Caco-2 (cell line): ENCODE measurements at regions of chr20 and their contacts with region 1.

Region 1: GRCh38 chr20:51910321-51911053 is 108.2 kb upstream of the SALL4 start:
- DNase-seq: peak; percentile 78 to 80
- H3K4me3 ChIP-seq: 0 out of 2 replicates have a peak overlapping the region, but pooled peaks have one; percentile 6
- H3K4me3 Mint-ChIP-seq: peak overlapping the region; percentile 68
- H3K27ac Mint-ChIP-seq: peak overlapping the region; percentile 82
- H3K4me1 ChIP-seq: peaks cover 39% of the 10 kb centered on the region
- H3K4me1 Mint-ChIP-seq: peaks cover 47% of the 10 kb centered on the region
- H3K27me3 ChIP-seq: no peaks in the 10 kb centered on the region
- H3K27me3 Mint-ChIP-seq: no peaks in the 10 kb centered on the region
- CTCF ChIP-seq: no peak

Region 2: DNA sequence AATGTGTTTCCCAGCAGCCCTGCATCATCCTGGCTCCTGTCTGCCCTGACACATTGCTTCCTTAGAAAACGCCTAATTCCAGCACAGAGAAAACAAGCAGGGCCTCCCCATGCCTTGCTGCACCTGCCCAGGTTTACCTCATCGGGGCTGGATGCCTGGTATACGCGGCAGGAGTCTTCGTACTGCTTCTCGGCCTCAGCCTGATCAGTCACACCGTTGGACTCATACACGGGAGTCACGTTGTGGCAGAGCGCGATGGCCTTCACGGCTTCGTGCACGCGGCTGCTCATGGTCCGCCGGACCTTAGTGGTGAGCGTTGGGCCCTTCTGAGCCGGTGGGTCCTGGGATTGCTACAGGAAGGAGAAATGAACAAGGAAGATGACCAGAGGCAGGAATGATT is 253.7 kb before region 1 on chr20:
- CTCF ChIA-PET with region 1: no interaction called
- POLR2A ChIA-PET with region 1: no interaction called
- intact Hi-C with region 1: loop called (anchors 1 kb)
- DNase-seq: no peak
- H3K4me3 ChIP-seq: no peak overlapping the region
- H3K4me3 Mint-ChIP-seq: no peak overlapping the region
- H3K27ac Mint-ChIP-seq: peak overlapping the region; percentile 9
- H3K4me1 ChIP-seq: peaks cover 39% of the 10 kb centered on the region
- H3K4me1 Mint-ChIP-seq: peaks cover 31% of the 10 kb centered on the region
- H3K27me3 ChIP-seq: no peaks in the 10 kb centered on the region
- H3K27me3 Mint-ChIP-seq: no peaks in the 10 kb centered on the region
- CTCF ChIP-seq: no peak

Region 3: DNA sequence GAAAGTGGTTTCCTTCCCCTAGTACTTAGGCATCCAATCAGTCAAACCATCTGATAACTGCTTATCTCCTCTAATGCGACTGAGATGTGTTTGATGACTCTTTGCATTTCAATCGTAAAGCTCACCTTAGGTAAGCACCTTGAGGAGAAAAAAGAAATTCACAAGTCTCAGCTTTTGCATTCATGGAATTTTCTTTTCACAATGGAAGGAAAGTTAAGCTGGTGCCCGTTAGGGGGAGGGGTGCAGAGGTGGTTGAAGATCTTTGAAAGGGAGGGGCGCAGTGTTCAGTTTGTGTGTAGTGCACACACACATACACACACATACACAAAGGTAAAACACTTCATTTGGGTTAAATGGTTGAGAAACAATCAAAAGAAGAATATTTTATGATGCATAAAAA is 21.0 kb before region 1 on chr20:
- CTCF ChIA-PET with region 1: no interaction called
- POLR2A ChIA-PET with region 1: no interaction called
- intact Hi-C with region 1: loop called (anchors 1 kb)
- DNase-seq: peak; percentile 62 to 72
- H3K4me3 ChIP-seq: no peak overlapping the region
- H3K4me3 Mint-ChIP-seq: peak overlapping the region; percentile 66
- H3K27ac Mint-ChIP-seq: peak overlapping the region; percentile 77
- H3K4me1 ChIP-seq: peaks cover 52% of the 10 kb centered on the region
- H3K4me1 Mint-ChIP-seq: peaks cover 49% of the 10 kb centered on the region
- H3K27me3 ChIP-seq: no peaks in the 10 kb centered on the region
- H3K27me3 Mint-ChIP-seq: no peaks in the 10 kb centered on the region
- CTCF ChIP-seq: no peak